Caco-2 (cell line): ENCODE measurements at regions of chr1 and their contacts with region 1.

Region 1: GRCh38 chr1:16078925-16079656 is 5.6 kb upstream of the FAM131C start:
- DNase-seq: peak; percentile 79 to 83
- H3K4me3 ChIP-seq: no peak overlapping the region
- H3K4me3 Mint-ChIP-seq: no peak overlapping the region
- H3K27ac Mint-ChIP-seq: no peak overlapping the region
- H3K4me1 ChIP-seq: peaks cover 5% of the 10 kb centered on the region; the same call in 1 of the 2 replicates
- H3K4me1 Mint-ChIP-seq: no peaks in the 10 kb centered on the region
- H3K27me3 ChIP-seq: no peaks in the 10 kb centered on the region
- H3K27me3 Mint-ChIP-seq: no peaks in the 10 kb centered on the region
- CTCF ChIP-seq: peak; percentile 68 to 85

Region 2: GRCh38 chr1:15994590-15995351 is 84.3 kb before region 1 on chr1:
- CTCF ChIA-PET with region 1: no interaction called
- POLR2A ChIA-PET with region 1: no interaction called
- intact Hi-C with region 1: no loop called
- DNase-seq: peak; percentile 61 to 67
- H3K4me3 ChIP-seq: no peak overlapping the region
- H3K4me3 Mint-ChIP-seq: no peak overlapping the region
- H3K27ac Mint-ChIP-seq: no peak overlapping the region
- H3K4me1 ChIP-seq: no peaks in the 10 kb centered on the region
- H3K4me1 Mint-ChIP-seq: no peaks in the 10 kb centered on the region
- H3K27me3 ChIP-seq: no peaks in the 10 kb centered on the region
- H3K27me3 Mint-ChIP-seq: no peaks in the 10 kb centered on the region
- CTCF ChIP-seq: peak; percentile 56 to 74

Region 3: GRCh38 chr1:16139473-16139962 is 60.4 kb after region 1 on chr1:
- CTCF ChIA-PET with region 1: interaction called, 15 read pairs
- POLR2A ChIA-PET with region 1: no interaction called
- intact Hi-C with region 1: loop called (anchors 5 kb)
- DNase-seq: no peak
- H3K4me3 ChIP-seq: no peak overlapping the region
- H3K4me3 Mint-ChIP-seq: no peak overlapping the region
- H3K27ac Mint-ChIP-seq: no peak overlapping the region
- H3K4me1 ChIP-seq: peaks cover 32% of the 10 kb centered on the region
- H3K4me1 Mint-ChIP-seq: peaks cover 19% of the 10 kb centered on the region
- H3K27me3 ChIP-seq: no peaks in the 10 kb centered on the region
- H3K27me3 Mint-ChIP-seq: no peaks in the 10 kb centered on the region
- CTCF ChIP-seq: no peak

Region 4: GRCh38 chr1:16155532-16156410 is 76.7 kb after region 1 on chr1 and contains the start of gene EPHA2:
- CTCF ChIA-PET with region 1: interaction called, 17 read pairs
- POLR2A ChIA-PET with region 1: no interaction called
- intact Hi-C with region 1: no loop called
- DNase-seq: peak; percentile 92 to 96
- H3K4me3 ChIP-seq: peak within 1 kb of the TSS; percentile 84
- H3K4me3 Mint-ChIP-seq: peak within 1 kb of the TSS; percentile 86
- H3K27ac Mint-ChIP-seq: peak within 1 kb of the TSS; percentile 94
- H3K4me1 ChIP-seq: peaks cover 39% of the 10 kb centered on the region
- H3K4me1 Mint-ChIP-seq: peaks cover 15% of the 10 kb centered on the region
- H3K27me3 ChIP-seq: no peaks in the 10 kb centered on the region
- H3K27me3 Mint-ChIP-seq: no peaks in the 10 kb centered on the region
- CTCF ChIP-seq: no peak
- total RNA-seq, gene EPHA2: 31.2 and 37.8 TPM in 2 replicates

Region 5: GRCh38 chr1:16243936-16244649 is 165.0 kb after region 1 on chr1:
- CTCF ChIA-PET with region 1: interaction called, 9 read pairs
- POLR2A ChIA-PET with region 1: no interaction called
- intact Hi-C with region 1: loop called (anchors 1 kb)
- DNase-seq: peak; percentile 67 to 73
- H3K4me3 ChIP-seq: no peak overlapping the region
- H3K4me3 Mint-ChIP-seq: no peak overlapping the region
- H3K27ac Mint-ChIP-seq: no peak overlapping the region
- H3K4me1 ChIP-seq: no peaks in the 10 kb centered on the region
- H3K4me1 Mint-ChIP-seq: no peaks in the 10 kb centered on the region
- H3K27me3 ChIP-seq: no peaks in the 10 kb centered on the region
- H3K27me3 Mint-ChIP-seq: no peaks in the 10 kb centered on the region
- CTCF ChIP-seq: peak; percentile 69